Activated CD4-positive, alpha-beta memory T cell treated with anti-CD3 and anti-CD28 coated beads for 36 hours (primary cell): ENCODE measurements at regions of chr6 and their contacts with region 1.

Region 1: GRCh38 chr6:160733050-160733646 is 31.1 kb downstream of the PLG start:
- DNase-seq: peak; percentile 30
- H3K4me3 Mint-ChIP-seq: no peak overlapping the region
- H3K27ac Mint-ChIP-seq: no peak overlapping the region
- H3K4me1 Mint-ChIP-seq: no peaks in the 10 kb centered on the region
- H3K27me3 Mint-ChIP-seq: peaks cover 5% of the 10 kb centered on the region

Region 2: GRCh38 chr6:160583794-160584193 is 149.4 kb before region 1 on chr6:
- CTCF ChIA-PET with region 1: no interaction called
- POLR2A ChIA-PET with region 1: no interaction called
- intact Hi-C with region 1: no loop called
- DNase-seq: no peak
- H3K4me3 Mint-ChIP-seq: no peak overlapping the region
- H3K27ac Mint-ChIP-seq: no peak overlapping the region
- H3K4me1 Mint-ChIP-seq: no peaks in the 10 kb centered on the region
- H3K27me3 Mint-ChIP-seq: peaks cover 32% of the 10 kb centered on the region

Region 3: GRCh38 chr6:160766989-160767660 is 34.0 kb after region 1 on chr6:
- CTCF ChIA-PET with region 1: interaction called, 23 read pairs
- POLR2A ChIA-PET with region 1: no interaction called
- intact Hi-C with region 1: loop called (anchors 1 kb)
- DNase-seq: peak; percentile 69
- H3K4me3 Mint-ChIP-seq: peak overlapping the region; percentile 63
- H3K27ac Mint-ChIP-seq: no peak overlapping the region
- H3K4me1 Mint-ChIP-seq: peaks cover 8% of the 10 kb centered on the region
- H3K27me3 Mint-ChIP-seq: peaks cover 21% of the 10 kb centered on the region